Activated T-helper 1 cell treated with anti-CD3 and anti-CD28 coated beads, Interleukin-12 subunit alpha, Interleukin-12 subunit beta, Interleukin-2, Interleukin-4 antibody, amounts not matched to agents 30 ng/mL and 10 ng/mL and 1 ng/mL, durations not matched to agents 14 hours and 24 hours and 36 hours (primary cell): ENCODE measurements at regions of chr6 and their contacts with region 1.

Region 1: GRCh38 chr6:90219209-90219985 is 77.2 kb downstream of the BACH2 start:
- DNase-seq: no peak
- H3K4me3 Mint-ChIP-seq: no peak overlapping the region
- H3K27ac Mint-ChIP-seq: no peak overlapping the region
- H3K4me1 Mint-ChIP-seq: no peaks in the 10 kb centered on the region
- H3K27me3 Mint-ChIP-seq: no peaks in the 10 kb centered on the region

Region 2: GRCh38 chr6:89952686-89953085 is 266.7 kb before region 1 on chr6:
- intact Hi-C with region 1: loop called (anchors 1 kb)
- DNase-seq: peak; percentile 54
- H3K4me3 Mint-ChIP-seq: peak overlapping the region; percentile 53
- H3K27ac Mint-ChIP-seq: peak overlapping the region; percentile 61
- H3K4me1 Mint-ChIP-seq: peaks cover 71% of the 10 kb centered on the region
- H3K27me3 Mint-ChIP-seq: no peaks in the 10 kb centered on the region

Region 3: DNA sequence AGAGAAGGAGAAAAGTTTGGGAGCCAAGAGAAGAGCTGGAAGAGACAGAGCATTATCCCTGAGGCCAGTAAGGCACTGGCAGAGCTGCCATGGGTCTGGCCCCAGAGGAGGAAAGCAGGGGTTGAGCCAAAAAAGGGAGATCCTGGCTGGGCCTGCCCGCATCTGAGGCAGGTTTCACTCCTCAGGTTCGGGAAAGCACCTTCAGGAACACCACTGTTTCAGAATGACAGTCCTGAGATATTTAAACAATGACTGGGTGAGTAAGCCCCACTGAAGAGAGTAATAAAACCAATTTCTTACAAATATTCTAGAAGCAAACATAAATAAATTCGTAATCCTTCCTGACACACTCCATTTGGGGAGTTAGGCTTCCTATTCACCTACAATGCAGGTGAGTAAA is 75.0 kb before region 1 on chr6:
- intact Hi-C with region 1: loop called (anchors 1 kb)
- DNase-seq: no peak
- H3K4me3 Mint-ChIP-seq: peak overlapping the region; percentile 45
- H3K27ac Mint-ChIP-seq: peak overlapping the region; percentile 78
- H3K4me1 Mint-ChIP-seq: peaks cover 66% of the 10 kb centered on the region
- H3K27me3 Mint-ChIP-seq: peaks cover 15% of the 10 kb centered on the region

Region 4: GRCh38 chr6:90194371-90194841 is 25.0 kb before region 1 on chr6:
- intact Hi-C with region 1: loop called (anchors 1 kb)
- DNase-seq: no peak
- H3K4me3 Mint-ChIP-seq: peak overlapping the region; percentile 38
- H3K27ac Mint-ChIP-seq: peak overlapping the region; percentile 54
- H3K4me1 Mint-ChIP-seq: peaks cover 68% of the 10 kb centered on the region
- H3K27me3 Mint-ChIP-seq: peaks cover 2% of the 10 kb centered on the region

Region 5: GRCh38 chr6:90202156-90202555 is 17.2 kb before region 1 on chr6:
- intact Hi-C with region 1: loop called (anchors 1 kb)
- DNase-seq: no peak
- H3K4me3 Mint-ChIP-seq: peak overlapping the region; percentile 71
- H3K27ac Mint-ChIP-seq: peak overlapping the region; percentile 85
- H3K4me1 Mint-ChIP-seq: peaks cover 43% of the 10 kb centered on the region
- H3K27me3 Mint-ChIP-seq: no peaks in the 10 kb centered on the region

Region 6: DNA sequence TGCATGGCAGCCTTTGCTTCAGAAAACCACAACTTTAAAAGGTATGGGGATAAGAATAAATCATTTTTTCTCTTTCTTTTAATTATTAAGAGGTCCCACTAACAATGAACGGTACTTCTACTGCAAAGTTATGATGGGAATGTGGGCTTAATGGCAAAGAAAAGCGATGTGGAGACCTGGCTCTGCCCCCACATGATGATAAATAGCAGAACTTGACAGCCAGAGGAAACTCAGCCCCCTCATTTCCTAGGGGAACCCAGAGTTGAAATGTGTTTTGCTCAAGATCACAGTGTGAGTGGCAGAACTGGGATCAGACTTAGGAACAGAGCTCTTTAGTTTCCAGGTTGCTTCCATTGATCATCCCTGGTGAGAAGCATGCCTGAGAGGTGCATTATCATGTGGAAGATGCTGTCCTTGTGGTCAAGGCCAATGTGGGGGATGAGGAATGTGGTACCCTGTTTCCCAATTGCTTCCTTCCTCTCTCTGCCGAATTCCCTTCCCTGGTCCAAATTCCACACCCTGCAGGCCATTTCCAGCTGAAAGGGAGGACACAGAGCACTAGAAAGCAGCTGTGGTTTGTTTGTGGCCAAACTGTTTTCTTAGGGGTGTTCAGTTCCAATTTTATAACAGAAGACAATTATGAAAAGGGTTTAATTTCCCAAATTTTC is 11.3 kb after region 1 on chr6:
- intact Hi-C with region 1: loop called (anchors 1 kb)
- DNase-seq: no peak
- H3K4me3 Mint-ChIP-seq: peak overlapping the region; percentile 10
- H3K27ac Mint-ChIP-seq: peak overlapping the region; percentile 31
- H3K4me1 Mint-ChIP-seq: peaks cover 89% of the 10 kb centered on the region
- H3K27me3 Mint-ChIP-seq: no peaks in the 10 kb centered on the region

Region 7: DNA sequence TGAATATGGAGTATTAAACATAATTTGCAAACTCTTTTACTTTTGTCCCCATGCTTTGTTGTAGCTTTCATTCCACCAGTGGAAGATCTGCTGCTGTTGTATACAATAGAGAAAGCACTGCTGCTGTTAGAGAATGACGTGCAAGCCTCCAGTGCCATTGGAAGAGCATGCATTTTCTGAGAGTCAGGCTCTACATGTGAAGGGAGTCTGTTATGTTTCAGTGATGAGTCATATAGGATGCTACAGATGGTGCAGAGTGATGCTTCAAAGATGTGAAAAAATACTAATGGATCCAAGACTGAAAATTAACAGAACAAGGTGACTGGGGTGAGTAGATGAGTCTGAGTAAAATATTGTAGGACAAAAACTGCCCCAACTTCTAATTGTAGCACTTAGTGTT is 99.6 kb after region 1 on chr6:
- intact Hi-C with region 1: no loop called
- DNase-seq: no peak
- H3K4me3 Mint-ChIP-seq: no peak overlapping the region
- H3K27ac Mint-ChIP-seq: peak overlapping the region; percentile 63
- H3K4me1 Mint-ChIP-seq: peaks cover 19% of the 10 kb centered on the region
- H3K27me3 Mint-ChIP-seq: peaks cover 4% of the 10 kb centered on the region

Region 8: DNA sequence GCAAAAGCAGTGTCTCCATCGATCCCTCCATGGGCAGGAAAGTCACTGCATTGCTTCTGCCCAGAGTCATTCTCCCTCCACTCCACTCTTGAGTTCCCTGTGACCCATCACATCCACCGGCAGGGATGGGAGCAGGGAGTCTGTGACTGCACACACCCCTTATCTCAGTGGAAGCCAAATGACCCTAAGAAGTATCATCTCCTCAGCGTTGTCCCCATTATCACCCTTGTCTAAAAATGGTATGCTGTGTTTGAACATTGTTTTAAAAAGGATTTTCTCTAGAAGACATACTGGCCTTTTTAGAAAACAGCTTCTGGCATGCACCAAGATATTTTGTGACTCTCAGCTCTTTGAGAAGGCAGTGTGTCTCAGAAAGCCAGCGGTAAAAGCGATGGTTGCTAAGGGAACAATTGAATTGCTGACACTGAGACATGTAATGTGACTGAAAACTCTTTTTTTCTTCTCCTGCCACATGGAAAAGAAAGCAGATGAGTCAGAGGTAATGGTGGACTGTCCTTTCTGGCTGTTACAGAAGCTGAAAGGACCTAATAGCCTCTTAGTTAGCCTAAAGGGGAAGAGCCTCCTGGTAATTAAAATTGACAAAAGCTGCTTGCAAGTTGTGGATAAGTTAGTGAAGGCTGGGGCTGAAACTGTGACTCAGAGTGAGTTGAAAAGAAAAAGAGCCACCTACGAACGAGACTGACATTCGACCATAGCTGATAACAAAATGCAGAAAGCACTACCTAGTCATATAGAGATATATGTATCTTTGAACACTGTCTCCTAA is 246.9 kb after region 1 on chr6:
- intact Hi-C with region 1: loop called (anchors 2 kb)
- DNase-seq: no peak
- H3K4me3 Mint-ChIP-seq: peak overlapping the region; percentile 61
- H3K27ac Mint-ChIP-seq: peak overlapping the region; percentile 92
- H3K4me1 Mint-ChIP-seq: peaks cover 93% of the 10 kb centered on the region
- H3K27me3 Mint-ChIP-seq: no peaks in the 10 kb centered on the region